Mammary epithelial cell (primary cell): ENCODE measurements at regions of chr1 and their contacts with region 1.

Region 1: GRCh38 chr1:207885129-207886032 is 25.5 kb downstream of the CD34 start:
- DNase-seq: peak; percentile 46
- H3K4me3 ChIP-seq: no peak overlapping the region
- H3K27ac ChIP-seq: no peak overlapping the region
- H3K4me1 ChIP-seq: peaks cover 15% of the 10 kb centered on the region
- H3K27me3 ChIP-seq: no peaks in the 10 kb centered on the region
- CTCF ChIP-seq: peak; percentile 93 to 94

Region 2: DNA sequence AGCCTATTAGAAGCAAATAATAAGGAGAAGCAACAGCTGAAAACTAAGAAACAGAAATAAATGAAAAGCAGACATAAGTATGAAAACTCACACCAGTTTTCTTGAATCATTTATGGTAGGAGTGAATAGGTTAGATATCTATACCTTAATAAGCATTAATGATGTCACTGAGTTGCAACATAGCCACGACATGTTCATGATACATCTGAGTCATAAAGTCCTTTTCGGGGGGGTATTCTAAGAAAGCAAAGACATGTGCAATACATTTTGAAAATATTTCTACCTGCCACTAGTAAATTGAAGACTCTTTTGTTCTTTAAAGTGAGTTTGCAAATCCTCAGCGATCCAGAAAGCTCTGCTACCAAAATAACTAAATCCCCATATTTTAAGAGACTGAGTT is 18.4 kb after region 1 on chr1:
- CTCF ChIA-PET with region 1: no interaction called
- dilution Hi-C with region 1: no loop called
- in situ Hi-C with region 1: no loop called
- intact Hi-C with region 1: no loop called
- DNase-seq: peak; percentile 24
- H3K4me3 ChIP-seq: no peak overlapping the region
- H3K27ac ChIP-seq: no peak overlapping the region
- H3K4me1 ChIP-seq: no peaks in the 10 kb centered on the region
- H3K27me3 ChIP-seq: no peaks in the 10 kb centered on the region
- CTCF ChIP-seq: no peak

Region 3: DNA sequence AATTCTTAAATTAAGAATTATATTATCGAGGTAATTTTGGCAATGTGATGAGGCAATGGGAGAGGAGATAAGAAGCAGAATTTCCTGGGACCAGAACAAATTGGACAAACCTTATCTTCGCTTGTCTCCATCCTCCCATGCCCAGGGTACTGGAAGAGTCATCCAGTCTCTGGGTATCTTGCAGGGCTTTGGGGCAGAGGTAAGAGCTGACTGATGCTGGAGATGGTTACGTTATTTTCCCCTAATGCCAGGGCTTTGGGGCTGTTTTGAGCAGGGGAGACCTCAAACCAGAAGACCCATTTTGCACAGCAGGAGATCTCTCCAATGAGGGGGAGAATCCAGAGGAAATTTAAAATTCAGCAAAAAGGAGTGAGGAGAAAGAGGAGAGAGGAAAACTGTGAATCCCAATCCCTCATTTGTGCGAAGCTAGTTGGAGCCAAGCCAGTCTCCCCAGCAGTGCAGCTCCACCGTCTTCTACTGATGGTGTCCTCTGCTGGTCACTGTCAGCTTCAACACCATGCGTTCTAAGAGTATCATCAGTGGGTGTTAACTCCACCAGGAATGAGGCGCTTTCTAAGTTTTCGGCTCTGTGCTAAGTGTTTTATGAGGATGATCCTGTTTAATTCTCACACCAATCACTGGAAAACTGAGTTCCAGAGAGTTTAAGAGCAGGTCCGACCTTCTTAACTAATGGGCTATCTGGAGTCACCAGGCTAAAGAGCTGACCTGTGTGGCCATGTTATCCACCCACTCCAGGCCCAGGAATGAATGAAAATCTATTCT is 112.3 kb after region 1 on chr1:
- CTCF ChIA-PET with region 1: interaction called, 12 read pairs
- dilution Hi-C with region 1: no loop called
- in situ Hi-C with region 1: no loop called
- intact Hi-C with region 1: loop called (anchors 1 kb)
- DNase-seq: peak; percentile 51
- H3K4me3 ChIP-seq: no peak overlapping the region
- H3K27ac ChIP-seq: no peak overlapping the region
- H3K4me1 ChIP-seq: no peaks in the 10 kb centered on the region
- H3K27me3 ChIP-seq: no peaks in the 10 kb centered on the region
- CTCF ChIP-seq: peak; percentile 81 to 88